HEK293 (cell line): ENCODE measurements at regions of chr2 and their contacts with region 1.

Region 1: GRCh38 chr2:24409700-24410556 is 49.6 kb upstream of the ITSN2 start:
- H3K4me3 ChIP-seq: no peak overlapping the region
- H3K27ac ChIP-seq: no peak overlapping the region
- H3K4me1 ChIP-seq: no peaks in the 10 kb centered on the region
- CTCF ChIP-seq: peak; percentile 54; the same call in 1 of the 2 replicates

Region 2: GRCh38 chr2:24123195-24123921 is 286.6 kb before region 1 on chr2 and contains the starts of genes FAM228B and PFN4:
- CTCF ChIA-PET with region 1: no interaction called
- POLR2A ChIA-PET with region 1: no interaction called
- H3K4me3 ChIP-seq: peak within 1 kb of the TSS; percentile 72
- H3K27ac ChIP-seq: peak within 1 kb of the TSS; percentile 79
- H3K4me1 ChIP-seq: peaks cover 3% of the 10 kb centered on the region
- CTCF ChIP-seq: peak; percentile 32

Region 3: DNA sequence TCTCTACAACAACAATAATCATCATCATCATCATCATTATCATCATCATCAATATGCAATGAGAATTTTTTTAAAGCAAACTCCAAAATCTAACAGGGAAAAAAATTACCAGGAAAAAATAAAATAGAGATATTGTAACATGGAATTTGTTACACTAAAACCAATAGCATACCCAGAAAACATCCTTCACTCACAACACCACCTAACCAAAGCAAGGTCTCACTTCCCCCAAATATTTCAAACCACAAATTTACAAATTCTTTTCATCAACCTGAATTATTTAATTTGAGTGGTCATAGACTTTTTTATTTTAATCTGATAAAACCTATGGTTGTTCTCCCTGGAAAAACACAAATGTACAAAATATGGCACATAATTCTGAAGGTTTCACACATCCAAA is 60.8 kb before region 1 on chr2:
- CTCF ChIA-PET with region 1: no interaction called
- POLR2A ChIA-PET with region 1: no interaction called
- H3K4me3 ChIP-seq: no peak overlapping the region
- H3K27ac ChIP-seq: no peak overlapping the region
- H3K4me1 ChIP-seq: peaks cover 11% of the 10 kb centered on the region
- CTCF ChIP-seq: no peak

Region 4: DNA sequence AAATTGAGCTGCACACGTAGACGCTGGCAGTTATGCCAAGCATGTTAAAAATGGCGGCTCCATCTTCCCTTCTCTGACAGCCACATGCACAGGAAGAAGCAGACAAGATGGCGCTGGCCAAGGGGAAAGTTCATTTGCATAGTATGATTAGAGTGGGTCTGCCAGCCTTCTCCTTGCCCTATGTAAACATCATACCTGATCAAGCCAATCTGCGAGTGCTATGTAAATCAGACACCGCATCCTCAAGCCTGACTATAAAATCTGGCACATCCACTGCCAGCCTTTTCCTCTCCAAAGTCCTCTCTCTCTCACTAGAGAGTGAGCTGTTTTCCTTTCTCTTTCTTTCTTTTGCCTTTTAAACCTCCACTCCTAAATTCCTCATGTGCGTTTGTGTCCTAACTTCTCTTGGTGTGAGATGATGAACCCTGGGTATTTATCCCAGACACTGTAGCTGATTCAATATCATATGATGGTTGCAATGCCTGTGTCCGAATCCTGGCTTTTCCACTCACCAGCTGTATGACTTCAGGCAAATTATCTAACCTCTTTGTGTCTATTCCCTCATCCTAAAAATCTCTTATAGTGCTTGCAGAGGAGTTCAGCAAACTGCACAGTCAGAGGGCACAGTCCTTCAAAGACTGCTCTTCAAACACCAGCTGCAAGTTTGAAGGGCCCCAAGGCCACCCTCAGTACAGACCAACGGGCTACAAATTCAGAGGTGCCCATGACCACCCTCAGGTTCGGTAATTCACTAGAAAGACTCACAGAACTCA is 10.3 kb before region 1 on chr2:
- CTCF ChIA-PET with region 1: interaction called, 15 read pairs
- POLR2A ChIA-PET with region 1: no interaction called
- H3K4me3 ChIP-seq: no peak overlapping the region
- H3K27ac ChIP-seq: no peak overlapping the region
- H3K4me1 ChIP-seq: no peaks in the 10 kb centered on the region
- CTCF ChIP-seq: no peak

Region 5: GRCh38 chr2:24421668-24422067 is 11.7 kb after region 1 on chr2:
- CTCF ChIA-PET with region 1: interaction called, 26 read pairs
- POLR2A ChIA-PET with region 1: no interaction called
- H3K4me3 ChIP-seq: no peak overlapping the region
- H3K27ac ChIP-seq: no peak overlapping the region
- H3K4me1 ChIP-seq: no peaks in the 10 kb centered on the region
- CTCF ChIP-seq: no peak

Region 6: DNA sequence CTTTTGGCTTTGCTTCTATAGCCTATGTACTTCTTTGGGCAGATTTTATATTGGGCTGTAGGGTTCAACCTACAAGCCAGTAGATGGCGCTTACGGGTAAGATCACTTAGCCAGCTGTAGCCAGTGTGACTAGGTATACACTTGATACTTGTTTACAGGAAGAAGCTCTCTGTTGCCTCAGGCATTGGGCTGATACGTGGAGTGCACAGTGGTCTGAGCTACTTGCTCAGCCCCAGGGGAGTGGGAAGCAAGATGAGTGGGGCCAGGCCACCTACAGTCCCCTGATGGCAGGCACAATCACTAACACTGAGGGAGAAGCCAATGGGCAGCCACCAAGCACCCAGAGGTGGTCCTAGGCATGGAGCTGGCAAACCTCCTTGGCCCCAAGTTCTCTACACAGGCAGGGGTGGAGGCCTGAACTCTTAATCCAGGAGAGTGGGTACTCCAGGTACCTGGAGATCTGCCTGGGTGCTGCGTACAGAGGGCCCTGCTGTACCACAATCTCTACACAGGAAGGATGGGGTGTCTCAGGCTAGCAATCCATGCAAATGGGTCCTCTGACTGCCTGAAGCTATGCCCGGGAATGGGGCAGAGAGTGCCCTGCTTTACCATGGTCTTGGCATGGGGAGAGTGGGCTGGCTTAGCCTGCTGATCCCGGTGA is 203.4 kb after region 1 on chr2:
- CTCF ChIA-PET with region 1: interaction called, 16 read pairs
- POLR2A ChIA-PET with region 1: no interaction called
- H3K4me3 ChIP-seq: no peak overlapping the region
- H3K27ac ChIP-seq: no peak overlapping the region
- H3K4me1 ChIP-seq: peaks cover 14% of the 10 kb centered on the region; the same call in 1 of the 2 replicates
- CTCF ChIP-seq: no peak

Region 7: DNA sequence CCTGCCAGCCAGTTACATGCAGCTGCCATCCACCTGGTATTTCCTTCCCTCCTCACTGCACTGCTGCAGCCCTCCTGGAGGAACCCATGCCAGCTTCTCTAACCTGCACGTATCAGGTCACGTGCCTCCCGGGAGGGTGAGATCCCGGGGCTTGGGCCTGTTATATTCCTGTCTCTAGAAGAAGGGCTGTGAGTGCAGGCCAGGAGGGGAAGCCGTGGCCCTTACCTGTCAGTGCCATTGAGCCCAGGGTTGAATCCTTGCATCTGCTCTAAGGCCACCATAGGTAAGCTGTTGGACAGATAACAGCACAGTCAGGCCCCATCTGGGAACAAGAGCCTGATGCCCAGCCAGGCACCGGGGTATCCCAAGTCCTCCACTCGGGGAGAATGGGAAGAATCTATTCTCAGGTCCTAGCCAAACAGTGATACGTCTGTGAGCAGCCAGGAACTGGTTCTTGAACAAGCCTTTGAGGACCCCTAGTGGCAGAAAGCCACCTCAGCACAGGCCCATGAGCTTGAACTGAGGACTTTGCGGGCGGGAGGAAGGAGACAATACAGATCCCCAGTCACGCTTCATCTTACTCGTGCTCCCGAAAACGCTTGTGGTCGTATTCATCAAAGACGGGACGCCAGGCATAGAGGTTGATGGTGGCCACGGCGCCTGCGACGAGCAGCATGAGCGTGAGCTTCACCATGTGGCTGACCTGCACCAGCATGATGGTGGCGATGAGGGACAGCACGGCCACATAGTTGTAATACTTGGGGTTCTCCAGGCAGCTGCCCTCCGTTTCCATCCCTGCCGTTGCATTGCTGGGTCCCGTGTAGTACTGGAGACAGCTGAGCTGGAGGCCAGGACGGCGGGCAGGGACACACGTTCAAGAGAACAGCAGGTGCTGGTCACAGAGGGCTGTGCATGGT is 417.7 kb after region 1 on chr2:
- CTCF ChIA-PET with region 1: interaction called, 38 read pairs
- POLR2A ChIA-PET with region 1: no interaction called
- H3K4me3 ChIP-seq: no peak overlapping the region
- H3K27ac ChIP-seq: no peak overlapping the region
- H3K4me1 ChIP-seq: no peaks in the 10 kb centered on the region
- CTCF ChIP-seq: peak; percentile 81